Ovary (tissue), 10 donors: ENCODE measurements at regions of chr17 and their contacts with region 1.

Region 1: GRCh38 chr17:55750750-55751657 is at the start of gene PCTP:
- DNase-seq: peak; percentile 91 to 95 (median 92)
- H3K4me3 ChIP-seq: peak within 1 kb of the TSS; percentile 84
- H3K27ac ChIP-seq: peak within 1 kb of the TSS in 1 of 2 donors; percentile 59
- H3K4me1 ChIP-seq: peaks cover 5% of the 10 kb centered on the region
- H3K27me3 ChIP-seq: no peaks in the 10 kb centered on the region
- CTCF ChIP-seq: peak in 2 of 3 donors; percentile 49 to 67
- EP300 ChIP-seq: no peak
- POLR2A ChIP-seq: peak; percentile 42
- total RNA-seq, gene PCTP: 7.7 to 16.4 (median 11.8) TPM

Region 2: DNA sequence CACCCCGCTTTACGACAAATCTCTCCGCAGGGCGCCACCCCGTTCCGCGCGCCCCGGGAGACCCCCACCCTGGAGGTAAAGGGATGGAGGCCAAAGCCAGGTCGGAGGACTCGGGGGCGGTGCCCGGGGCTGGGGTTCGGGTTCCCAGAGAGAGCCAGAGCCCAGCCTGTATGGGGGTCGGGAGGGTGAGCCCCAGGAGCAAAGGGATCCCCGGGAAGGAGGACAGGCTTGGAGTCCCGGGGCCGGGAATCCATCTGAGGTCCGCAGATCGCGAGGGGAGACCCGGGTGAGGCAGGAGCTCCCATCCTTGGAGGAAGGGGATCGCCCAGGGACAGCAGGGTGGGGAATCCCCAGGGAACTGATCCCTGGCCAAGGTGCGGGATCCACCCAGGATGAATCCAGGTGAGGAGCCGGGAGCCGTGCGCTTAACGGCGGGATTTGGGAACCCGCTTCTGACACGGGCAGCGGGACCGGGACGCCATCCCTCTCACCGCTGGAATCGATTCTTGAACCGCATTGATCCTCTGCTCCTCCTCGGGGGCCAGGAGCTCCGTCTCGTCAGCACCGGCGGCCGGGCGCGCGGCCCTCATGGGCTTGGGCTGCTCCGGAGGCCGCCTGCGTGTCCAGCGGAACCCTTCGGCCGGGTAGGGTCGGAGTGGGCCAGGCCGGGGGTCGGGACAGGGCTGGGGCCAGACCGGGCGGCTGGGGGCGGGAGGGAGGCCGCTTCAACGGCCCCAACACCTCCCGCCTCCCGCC is 329.6 kb before region 1 on chr17 and contains the start of gene MMD:
- intact Hi-C with region 1: loop called in 1 of 4 experiments (anchors 10 kb)
- DNase-seq: peak in 1 of 5 donors; percentile 26
- H3K4me3 ChIP-seq: peak within 1 kb of the TSS; percentile 90
- H3K27ac ChIP-seq: peak within 1 kb of the TSS in 1 of 2 donors; percentile 43
- H3K4me1 ChIP-seq: no peaks in the 10 kb centered on the region
- H3K27me3 ChIP-seq: no peaks in the 10 kb centered on the region
- CTCF ChIP-seq: no peak
- EP300 ChIP-seq: no peak
- POLR2A ChIP-seq: peak; percentile 22
- total RNA-seq, gene MMD: 5.3 to 11.0 (median 6.7) TPM

Region 3: GRCh38 chr17:55845385-55845784 is 94.4 kb after region 1 on chr17:
- intact Hi-C with region 1: no loop called
- DNase-seq: peak; percentile 15 to 54 (median 22)
- H3K4me3 ChIP-seq: no peak overlapping the region
- H3K27ac ChIP-seq: no peak overlapping the region
- H3K4me1 ChIP-seq: no peaks in the 10 kb centered on the region
- H3K27me3 ChIP-seq: no peaks in the 10 kb centered on the region
- CTCF ChIP-seq: no peak
- EP300 ChIP-seq: no peak
- POLR2A ChIP-seq: no peak

Region 4: DNA sequence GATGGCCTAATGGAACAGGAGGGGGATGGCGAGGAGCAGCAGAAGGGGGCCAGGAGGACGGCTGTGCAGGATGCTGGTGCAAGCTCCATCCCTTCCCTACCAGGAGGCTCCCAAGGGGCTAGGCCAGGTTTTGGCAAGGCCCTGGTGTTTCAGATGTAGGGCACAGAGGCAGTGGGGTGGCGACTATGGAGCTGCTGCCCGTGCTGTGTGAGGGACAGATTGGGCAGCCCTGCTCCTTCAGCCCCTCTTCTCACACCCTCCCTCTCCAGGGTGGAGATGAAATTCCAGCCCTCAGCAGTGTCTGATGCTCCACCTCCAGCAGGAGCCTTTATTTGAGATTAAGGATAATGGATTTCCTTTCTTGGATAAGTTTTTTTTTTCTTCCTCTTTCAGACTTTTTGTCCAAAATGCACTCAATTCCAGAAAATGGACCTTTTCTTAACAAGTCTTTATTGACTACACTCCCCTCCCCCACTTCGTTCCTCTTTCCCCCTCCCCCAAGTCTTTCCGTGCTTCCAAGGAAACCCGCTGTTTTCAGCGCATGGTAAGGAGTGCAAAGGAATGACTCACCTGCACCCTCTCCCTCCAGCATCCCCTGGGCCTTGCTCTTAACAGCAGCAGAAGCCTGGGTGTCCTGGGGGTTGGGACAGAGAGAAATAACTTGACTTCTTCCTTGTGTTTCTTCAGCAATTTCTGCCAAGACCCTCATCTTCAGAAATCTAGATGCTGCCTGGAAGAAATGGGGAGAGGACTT is 1898.9 kb after region 1 on chr17:
- intact Hi-C with region 1: no loop called
- DNase-seq: no peak
- H3K4me3 ChIP-seq: no peak overlapping the region
- H3K27ac ChIP-seq: no peak overlapping the region
- H3K4me1 ChIP-seq: peaks cover 2% of the 10 kb centered on the region
- H3K27me3 ChIP-seq: no peaks in the 10 kb centered on the region
- CTCF ChIP-seq: no peak
- EP300 ChIP-seq: no peak
- POLR2A ChIP-seq: no peak